ENCODE measurements at regions of chr15 and their contacts with region 1.

Region 1: GRCh38 chr15:77195586-77195985 is 124.7 kb upstream of the TSPAN3 start:
- DNase-seq: no peak
- ATAC-seq: no peak
- H3K4me3 ChIP-seq: no peak overlapping the region
- H3K27ac ChIP-seq: no peak overlapping the region
- H3K4me1 ChIP-seq: peaks cover 0 to 18% (median 6%) of the 10 kb centered on the region in 9 donors
- H3K27me3 ChIP-seq: no peaks in the 10 kb centered on the region
- CTCF ChIP-seq: no peak

Region 2: DNA sequence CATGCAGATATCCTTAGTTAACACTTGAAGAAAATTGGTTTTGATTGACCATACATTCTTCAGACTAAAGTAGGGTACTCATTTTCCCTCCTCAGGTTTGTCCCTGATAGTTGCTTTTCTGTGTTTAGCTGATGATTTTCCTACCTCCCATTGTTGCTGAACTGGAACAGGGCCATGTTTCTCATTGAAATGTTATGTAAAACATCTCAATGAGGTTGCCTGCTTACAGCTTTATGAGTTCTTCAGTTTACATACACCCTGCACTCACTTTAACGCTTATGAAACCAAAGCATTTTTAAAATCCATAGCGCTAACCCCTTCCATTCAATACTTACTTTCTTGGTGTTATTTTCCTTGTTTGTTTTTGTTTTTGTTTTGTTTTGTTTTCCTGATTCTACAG is 287.0 kb after region 1 on chr15:
- intact Hi-C with region 1: loop called in 1 of 10 experiments (anchors 5 kb)
- DNase-seq: no peak
- ATAC-seq: peak in 4 of 8 donors; percentile 50 to 63 (median 55)
- H3K4me3 ChIP-seq: no peak overlapping the region
- H3K27ac ChIP-seq: peak overlapping the region in 9 of 10 donors; percentile 20 to 85 (median 63)
- H3K4me1 ChIP-seq: peaks cover 9 to 73% (median 56%) of the 10 kb centered on the region in 9 donors
- H3K27me3 ChIP-seq: no peaks in the 10 kb centered on the region
- CTCF ChIP-seq: no peak

Measured in heart right ventricle (tissue), 16 donors.